RWPE1 (cell line): ENCODE measurements at regions of chr3 and their contacts with region 1.

Region 1: GRCh38 chr3:185983495-185984141 is 45.8 kb upstream of the TRA2B start:
- DNase-seq: peak; percentile 81
- H3K27ac ChIP-seq: no peak overlapping the region
- CTCF ChIP-seq: peak; percentile 82

Region 2: GRCh38 chr3:184993394-184993793 is 990.2 kb before region 1 on chr3:
- CTCF ChIA-PET with region 1: interaction called, 10 read pairs
- POLR2A ChIA-PET with region 1: no interaction called
- DNase-seq: no peak
- H3K27ac ChIP-seq: no peak overlapping the region
- CTCF ChIP-seq: no peak

Region 3: DNA sequence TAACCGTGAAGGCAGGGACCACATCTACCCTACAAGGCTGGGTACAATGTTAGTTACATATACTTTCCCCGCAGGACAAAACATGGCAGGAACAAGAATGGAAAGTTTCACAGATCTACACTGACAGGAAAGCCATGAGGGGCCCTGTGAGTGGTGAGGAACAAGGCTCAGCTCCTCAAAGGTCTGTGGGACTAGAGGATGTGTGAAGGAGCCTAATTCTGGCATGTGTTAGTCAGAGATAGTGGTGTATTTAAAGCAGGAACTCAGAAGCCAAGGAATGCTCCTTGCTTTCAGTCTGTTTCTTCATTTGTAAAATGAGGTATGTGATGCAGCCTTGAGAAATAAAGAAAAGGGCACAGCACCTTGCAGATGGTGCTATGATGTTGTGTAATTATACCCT is 100.1 kb after region 1 on chr3:
- CTCF ChIA-PET with region 1: no interaction called
- POLR2A ChIA-PET with region 1: no interaction called
- DNase-seq: no peak
- H3K27ac ChIP-seq: no peak overlapping the region
- CTCF ChIP-seq: no peak

Region 4: GRCh38 chr3:186095561-186096081 is 112.0 kb after region 1 on chr3:
- CTCF ChIA-PET with region 1: no interaction called
- POLR2A ChIA-PET with region 1: no interaction called
- DNase-seq: no peak
- H3K27ac ChIP-seq: no peak overlapping the region
- CTCF ChIP-seq: no peak

Region 5: GRCh38 chr3:186241910-186242821 is 258.5 kb after region 1 on chr3:
- CTCF ChIA-PET with region 1: interaction called, 12 read pairs
- POLR2A ChIA-PET with region 1: no interaction called
- DNase-seq: peak; percentile 22
- H3K27ac ChIP-seq: 0 out of 2 replicates have a peak overlapping the region, but pooled peaks have one; percentile 2
- CTCF ChIP-seq: no peak